Endothelial cell of umbilical vein (primary cell): ENCODE measurements at regions of chr2 and their contacts with region 1.

Region 1: GRCh38 chr2:197159661-197160211 is 150.8 kb downstream of the ANKRD44 start:
- DNase-seq: peak; percentile 95
- H3K4me3 ChIP-seq: peak overlapping the region in 1 of 3 experiments; percentile 48
- H3K27ac ChIP-seq: peak overlapping the region; percentile 95
- H3K4me1 ChIP-seq: peaks cover 47% of the 10 kb centered on the region
- H3K27me3 ChIP-seq: no peaks in the 10 kb centered on the region
- CTCF ChIP-seq: no peak
- POLR2A ChIP-seq: no peak

Region 2: DNA sequence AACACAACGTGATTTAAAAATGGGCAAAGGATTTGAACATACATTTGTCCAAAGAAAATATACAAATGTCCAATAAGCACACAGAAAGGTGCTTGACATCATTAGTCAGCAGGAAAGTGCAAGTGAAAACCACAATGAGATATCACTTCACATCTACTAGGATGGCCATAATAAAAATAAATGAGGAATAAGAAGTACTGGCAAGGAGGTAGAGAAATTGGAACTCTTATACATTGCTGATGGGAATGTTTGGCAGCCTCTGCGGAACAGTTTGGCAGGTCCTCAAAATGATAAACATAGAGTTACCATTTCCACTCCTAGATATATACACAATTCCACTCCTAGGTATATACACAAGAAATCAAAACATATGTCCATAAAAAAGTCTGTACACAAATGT is 182.2 kb before region 1 on chr2:
- CTCF ChIA-PET with region 1: no interaction called
- POLR2A ChIA-PET with region 1: no interaction called
- dilution Hi-C with region 1: no loop called
- intact Hi-C with region 1: no loop called
- DNase-seq: peak; percentile 25
- H3K4me3 ChIP-seq: no peak overlapping the region
- H3K27ac ChIP-seq: no peak overlapping the region
- H3K4me1 ChIP-seq: no peaks in the 10 kb centered on the region
- H3K27me3 ChIP-seq: no peaks in the 10 kb centered on the region
- CTCF ChIP-seq: no peak
- POLR2A ChIP-seq: no peak

Region 3: DNA sequence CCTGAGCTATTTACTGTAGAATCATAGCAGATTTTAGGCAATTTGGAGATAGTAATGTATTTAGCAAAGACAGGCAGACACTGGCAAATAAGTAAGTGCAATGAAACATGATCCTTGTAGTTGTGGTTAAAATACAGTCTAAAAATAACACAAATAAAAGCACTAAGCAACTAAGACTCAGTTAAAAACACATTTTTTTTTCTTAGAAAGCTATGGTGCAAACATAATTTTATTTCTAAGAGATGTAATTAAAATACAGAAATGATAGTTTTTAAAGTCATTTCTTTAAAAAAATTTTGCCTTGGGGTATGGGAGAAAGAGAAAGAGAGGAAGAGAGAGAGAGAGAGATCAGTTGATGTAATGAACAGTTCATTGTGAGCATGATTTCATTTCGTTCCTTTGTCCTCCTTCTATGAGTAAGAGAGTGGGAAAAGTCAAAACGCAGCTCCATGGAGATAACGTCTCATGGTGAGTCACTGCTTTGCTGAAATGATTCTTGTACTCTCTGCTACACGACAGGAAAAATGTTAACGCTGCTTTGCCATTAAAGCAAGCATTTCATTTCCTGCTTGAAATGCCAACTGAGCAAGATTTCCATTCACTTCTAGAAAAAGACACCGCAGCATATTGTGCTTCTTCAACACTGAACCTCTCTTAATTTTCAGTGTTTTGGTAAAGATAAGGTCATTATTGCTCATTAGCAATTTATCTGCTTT is 171.9 kb before region 1 on chr2:
- CTCF ChIA-PET with region 1: no interaction called
- POLR2A ChIA-PET with region 1: no interaction called
- dilution Hi-C with region 1: no loop called
- intact Hi-C with region 1: loop called (anchors 2 kb)
- DNase-seq: peak; percentile 98
- H3K4me3 ChIP-seq: peak overlapping the region in 1 of 3 experiments; percentile 24
- H3K27ac ChIP-seq: peak overlapping the region; percentile 93
- H3K4me1 ChIP-seq: peaks cover 18% of the 10 kb centered on the region
- H3K27me3 ChIP-seq: no peaks in the 10 kb centered on the region
- CTCF ChIP-seq: no peak
- POLR2A ChIP-seq: peak; percentile 47

Region 4: DNA sequence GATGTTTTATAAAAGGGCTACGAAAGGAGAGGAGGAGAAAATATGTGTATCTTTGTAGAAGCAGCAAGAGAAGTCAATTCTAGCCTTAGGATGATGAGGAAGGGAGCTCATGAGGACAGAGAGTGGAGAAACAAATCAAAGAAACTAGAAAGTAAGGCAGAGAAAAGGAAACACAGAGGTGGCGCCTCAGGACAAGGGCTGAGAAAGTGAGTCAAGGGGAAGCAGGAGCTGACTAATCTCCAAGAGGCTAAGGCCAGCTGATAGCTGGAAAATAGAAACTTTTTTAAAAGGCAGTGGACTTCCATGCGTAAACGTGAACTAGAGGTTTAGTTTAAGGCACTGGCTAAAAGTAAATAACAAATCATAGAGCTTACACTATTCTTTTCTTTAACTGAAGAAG is 22.5 kb before region 1 on chr2:
- CTCF ChIA-PET with region 1: interaction called, 23 read pairs
- POLR2A ChIA-PET with region 1: no interaction called
- dilution Hi-C with region 1: no loop called
- intact Hi-C with region 1: loop called (anchors 1 kb)
- DNase-seq: peak; percentile 79
- H3K4me3 ChIP-seq: peak overlapping the region in 1 of 3 experiments; percentile 9
- H3K27ac ChIP-seq: peak overlapping the region; percentile 71
- H3K4me1 ChIP-seq: peaks cover 25% of the 10 kb centered on the region
- H3K27me3 ChIP-seq: no peaks in the 10 kb centered on the region
- CTCF ChIP-seq: no peak
- POLR2A ChIP-seq: no peak

Region 5: GRCh38 chr2:197179744-197180498 is 20.2 kb after region 1 on chr2:
- CTCF ChIA-PET with region 1: interaction called, 3 read pairs
- POLR2A ChIA-PET with region 1: no interaction called
- dilution Hi-C with region 1: no loop called
- intact Hi-C with region 1: loop called (anchors 1 kb)
- DNase-seq: peak; percentile 82
- H3K4me3 ChIP-seq: no peak overlapping the region
- H3K27ac ChIP-seq: peak overlapping the region; percentile 76
- H3K4me1 ChIP-seq: peaks cover 15% of the 10 kb centered on the region
- H3K27me3 ChIP-seq: no peaks in the 10 kb centered on the region
- CTCF ChIP-seq: no peak
- POLR2A ChIP-seq: no peak